A673 (cell line): ENCODE measurements at regions of chr3 and their contacts with region 1.

Region 1: DNA sequence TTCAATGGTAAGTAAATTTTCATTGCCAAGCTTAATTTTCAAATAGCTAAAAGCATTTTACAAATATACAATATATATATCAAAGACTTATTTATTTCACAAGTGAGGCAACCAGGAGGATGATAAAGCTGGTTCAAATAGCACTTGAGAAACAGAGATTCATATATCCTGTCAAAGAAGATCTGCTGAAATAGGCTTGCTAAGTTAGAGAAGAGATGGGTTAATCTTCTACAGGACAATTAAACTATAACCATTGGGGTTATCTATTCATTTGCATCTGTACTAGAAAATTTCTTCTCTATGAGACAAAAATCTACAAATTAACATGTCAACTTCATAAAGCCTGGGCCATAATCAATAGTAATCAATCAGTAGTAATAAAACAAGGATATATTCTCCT is 637.7 kb upstream of the UBE2E2 start:
- DNase-seq: no peak
- H3K4me3 ChIP-seq: no peak overlapping the region
- H3K27ac ChIP-seq: no peak overlapping the region
- H3K4me1 ChIP-seq: no peaks in the 10 kb centered on the region
- H3K27me3 ChIP-seq: no peaks in the 10 kb centered on the region
- CTCF ChIP-seq: no peak

Region 2: DNA sequence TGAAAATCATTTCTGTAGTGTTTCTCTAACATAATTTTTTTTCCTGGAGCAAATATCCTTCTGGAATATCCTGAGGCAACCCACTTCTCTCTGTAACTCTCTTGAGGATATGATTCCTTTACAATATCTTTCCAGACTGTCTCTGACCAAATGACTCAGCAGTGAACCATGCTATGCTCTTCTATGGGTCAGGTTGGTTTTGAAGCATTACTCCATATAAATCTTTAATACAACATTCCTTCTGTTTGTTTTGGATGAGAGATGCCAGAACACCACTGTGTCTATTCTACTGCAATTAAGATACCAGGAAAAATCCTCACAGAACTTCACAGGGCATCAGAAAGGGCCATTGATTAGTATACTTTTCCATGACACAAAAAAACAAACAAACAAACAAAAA is 188.0 kb before region 1 on chr3:
- CTCF ChIA-PET with region 1: no interaction called
- POLR2A ChIA-PET with region 1: no interaction called
- intact Hi-C with region 1: no loop called
- DNase-seq: no peak
- H3K4me3 ChIP-seq: no peak overlapping the region
- H3K27ac ChIP-seq: no peak overlapping the region
- H3K4me1 ChIP-seq: no peaks in the 10 kb centered on the region
- H3K27me3 ChIP-seq: no peaks in the 10 kb centered on the region
- CTCF ChIP-seq: no peak

Region 3: GRCh38 chr3:22960105-22960984 is 395.0 kb after region 1 on chr3:
- CTCF ChIA-PET with region 1: no interaction called
- POLR2A ChIA-PET with region 1: no interaction called
- intact Hi-C with region 1: loop called (anchors 1 kb)
- DNase-seq: peak; percentile 34
- H3K4me3 ChIP-seq: no peak overlapping the region
- H3K27ac ChIP-seq: no peak overlapping the region
- H3K4me1 ChIP-seq: no peaks in the 10 kb centered on the region
- H3K27me3 ChIP-seq: no peaks in the 10 kb centered on the region
- CTCF ChIP-seq: peak; percentile 68